Heart left ventricle (tissue), 16 donors: ENCODE measurements at regions of chr16 and their contacts with region 1.

Region 1: DNA sequence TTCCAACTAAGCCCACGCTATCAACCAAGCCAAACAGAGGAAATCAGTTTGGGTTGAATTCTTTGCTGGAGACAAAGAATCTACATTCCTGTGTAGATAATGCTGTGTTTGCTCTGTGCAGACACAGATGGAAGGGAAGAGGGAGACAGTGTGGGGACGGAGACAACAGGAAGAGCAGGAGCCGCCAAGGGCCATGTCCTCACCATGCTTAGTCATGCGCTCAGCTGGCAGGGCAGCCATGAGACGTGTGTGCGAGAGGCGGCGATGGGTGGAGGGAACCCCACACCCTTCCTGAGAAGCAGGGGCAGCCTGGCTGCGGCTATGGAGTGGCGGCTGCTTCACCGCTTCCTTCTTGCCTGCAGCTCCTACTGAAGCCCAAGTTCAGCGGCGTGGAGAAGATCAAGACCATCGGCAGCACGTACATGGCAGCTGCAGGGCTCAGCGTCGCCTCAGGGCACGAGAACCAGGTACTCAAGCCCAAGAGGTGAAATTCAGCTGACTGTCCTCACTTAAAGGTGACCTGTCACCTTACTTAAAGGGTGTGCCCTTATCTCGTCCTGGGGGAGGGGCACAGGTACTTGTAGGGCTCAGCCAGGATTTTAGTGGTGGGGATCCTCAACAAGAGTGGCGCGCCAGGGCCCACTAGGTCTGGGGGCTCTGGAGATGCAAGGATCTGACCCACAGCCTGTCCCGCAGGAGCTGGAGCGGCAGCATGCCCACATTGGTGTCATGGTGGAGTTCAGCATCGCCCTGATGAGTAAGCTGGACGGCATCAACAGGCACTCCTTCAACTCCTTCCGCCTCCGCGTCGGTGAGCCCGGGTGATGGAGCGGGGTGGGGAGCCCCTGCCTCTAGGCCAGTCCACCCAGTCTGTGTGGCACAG is 47.5 kb downstream of the ADCY7 start:
- DNase-seq: peak; percentile 60 to 84 (median 79)
- ATAC-seq: peak; percentile 60 to 85 (median 78)
- H3K4me3 ChIP-seq: no peak overlapping the region
- H3K27ac ChIP-seq: peak overlapping the region in 7 of 12 donors; percentile 10 to 70 (median 56)
- H3K4me1 ChIP-seq: peaks cover 0 to 31% (median 5%) of the 10 kb centered on the region in 12 donors
- H3K27me3 ChIP-seq: no peaks in the 10 kb centered on the region
- CTCF ChIP-seq: no peak
- POLR2A ChIP-seq: no peak

Region 2: DNA sequence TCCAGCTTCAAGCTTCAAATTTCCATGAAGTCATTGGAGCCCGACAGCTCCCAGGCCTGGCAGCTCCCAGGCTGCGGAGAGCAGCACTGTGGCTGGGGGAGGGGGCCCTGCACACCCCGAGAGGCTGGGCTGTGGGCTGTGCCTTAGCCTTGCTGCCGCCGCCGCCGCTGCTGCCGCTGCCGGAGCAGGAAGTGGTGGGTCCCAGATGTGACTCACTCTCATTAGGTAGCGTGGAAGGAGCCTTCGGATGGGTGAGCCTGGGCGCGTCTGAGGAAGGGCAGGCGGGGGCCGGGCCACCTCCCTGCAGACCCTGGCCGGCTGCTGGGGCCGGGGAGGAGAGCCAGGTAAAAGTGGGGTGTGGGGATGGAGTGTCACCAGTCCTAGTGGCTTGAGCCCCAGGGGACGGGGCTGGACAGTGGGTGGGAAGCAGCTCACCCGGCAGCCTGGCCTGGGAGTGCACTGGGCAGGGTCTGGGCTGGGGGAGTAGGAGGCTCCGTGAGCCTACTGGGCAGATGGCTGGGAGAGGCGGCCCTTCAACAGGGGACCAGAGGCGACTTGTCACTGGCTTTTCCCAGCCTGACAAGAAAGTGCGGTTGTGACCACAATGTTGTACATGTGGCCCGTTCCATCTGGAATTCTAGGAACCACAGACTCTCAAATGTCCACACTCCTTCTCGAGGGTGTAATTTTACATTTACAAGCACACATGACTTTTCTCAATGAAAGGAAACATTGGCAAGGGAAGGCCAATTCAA is 47.3 kb before region 1 on chr16 and contains the start of gene ADCY7:
- intact Hi-C with region 1: loop called in 1 of 10 experiments (anchors 10 kb)
- DNase-seq: peak; percentile 54 to 90 (median 74)
- ATAC-seq: peak in 3 of 4 donors; percentile 78 to 92 (median 89)
- H3K4me3 ChIP-seq: peak within 1 kb of the TSS in 10 of 12 donors; percentile 24 to 67 (median 48)
- H3K27ac ChIP-seq: peak within 1 kb of the TSS in 5 of 12 donors; percentile 45 to 90 (median 71)
- H3K4me1 ChIP-seq: peaks cover 0 to 69% (median 0%) of the 10 kb centered on the region in 12 donors
- H3K27me3 ChIP-seq: no peaks in the 10 kb centered on the region
- CTCF ChIP-seq: no peak
- POLR2A ChIP-seq: no peak
- total RNA-seq, gene ADCY7: 3.2 to 46.7 (median 9.0) TPM